Left cardiac atrium (tissue), 4 donors: ENCODE measurements at regions of chr2 and their contacts with region 1.

Region 1: GRCh38 chr2:158473719-158474392 is 17.1 kb downstream of the PKP4 start:
- DNase-seq: no peak
- ATAC-seq: no peak

Region 2: GRCh38 chr2:157984866-157985265 is 489.0 kb before region 1 on chr2:
- intact Hi-C with region 1: no loop called
- DNase-seq: no peak
- ATAC-seq: no peak

Region 3: DNA sequence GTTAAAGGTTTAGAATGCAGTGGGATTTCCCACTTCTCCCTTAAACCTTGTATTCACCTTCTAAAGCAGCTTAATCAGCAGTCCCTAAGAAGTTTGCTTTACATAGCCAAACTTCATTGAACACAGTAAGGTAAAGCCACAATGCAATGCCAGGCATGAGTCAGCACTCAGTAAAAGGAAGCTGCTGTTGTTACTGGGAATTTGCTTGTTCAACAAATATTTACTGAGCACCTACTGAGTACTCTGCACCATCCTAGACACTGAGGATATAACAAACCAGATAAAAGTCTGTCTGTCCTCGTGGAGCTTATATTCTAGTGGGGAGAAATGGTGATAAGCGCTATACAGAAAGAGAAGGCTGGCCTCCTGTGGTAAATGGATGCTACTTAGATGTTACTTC is 145.6 kb after region 1 on chr2:
- intact Hi-C with region 1: loop called in 1 of 2 experiments (anchors 10 kb)
- DNase-seq: no peak
- ATAC-seq: no peak

Region 4: DNA sequence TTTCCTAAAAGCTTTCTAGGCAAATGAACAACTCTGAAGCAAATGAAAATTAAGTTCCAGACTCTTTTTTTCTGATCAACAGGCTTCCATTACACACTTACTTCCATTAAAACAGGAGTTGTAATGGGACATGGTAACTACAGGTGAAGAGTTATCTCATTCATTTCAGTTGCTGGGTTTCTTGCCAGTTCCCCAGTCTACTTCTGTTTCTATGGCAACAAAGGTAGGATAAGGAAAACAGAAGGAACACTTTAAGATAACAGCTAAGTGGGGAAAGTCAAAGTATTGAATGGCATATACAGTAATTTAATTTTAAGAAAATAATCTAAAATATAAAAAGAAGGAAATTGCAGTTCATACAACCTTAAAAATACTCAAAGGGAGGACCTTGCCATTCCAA is 1117.4 kb after region 1 on chr2:
- intact Hi-C with region 1: no loop called
- DNase-seq: no peak
- ATAC-seq: no peak